ENCODE measurements at regions of chr7 and their contacts with region 1.

Region 1: GRCh38 chr7:992709-993607 is 10.0 kb downstream of the CYP2W1 start:
- DNase-seq: peak; percentile 85 to 97
- H3K4me3 ChIP-seq: no peak overlapping the region
- H3K27ac ChIP-seq: no peak overlapping the region
- H3K4me1 ChIP-seq: no peaks in the 10 kb centered on the region
- H3K27me3 ChIP-seq: no peaks in the 10 kb centered on the region
- CTCF ChIP-seq: peak; percentile 99

Region 2: GRCh38 chr7:913736-914516 is 79.0 kb before region 1 on chr7:
- CTCF ChIA-PET with region 1: no interaction called
- POLR2A ChIA-PET with region 1: no interaction called
- intact Hi-C with region 1: loop called (anchors 1 kb)
- DNase-seq: peak; percentile 65 to 98
- H3K4me3 ChIP-seq: no peak overlapping the region
- H3K27ac ChIP-seq: no peak overlapping the region
- H3K4me1 ChIP-seq: peaks cover 12% of the 10 kb centered on the region
- H3K27me3 ChIP-seq: no peaks in the 10 kb centered on the region
- CTCF ChIP-seq: no peak; the same call in 1 of the 2 replicates

Region 3: DNA sequence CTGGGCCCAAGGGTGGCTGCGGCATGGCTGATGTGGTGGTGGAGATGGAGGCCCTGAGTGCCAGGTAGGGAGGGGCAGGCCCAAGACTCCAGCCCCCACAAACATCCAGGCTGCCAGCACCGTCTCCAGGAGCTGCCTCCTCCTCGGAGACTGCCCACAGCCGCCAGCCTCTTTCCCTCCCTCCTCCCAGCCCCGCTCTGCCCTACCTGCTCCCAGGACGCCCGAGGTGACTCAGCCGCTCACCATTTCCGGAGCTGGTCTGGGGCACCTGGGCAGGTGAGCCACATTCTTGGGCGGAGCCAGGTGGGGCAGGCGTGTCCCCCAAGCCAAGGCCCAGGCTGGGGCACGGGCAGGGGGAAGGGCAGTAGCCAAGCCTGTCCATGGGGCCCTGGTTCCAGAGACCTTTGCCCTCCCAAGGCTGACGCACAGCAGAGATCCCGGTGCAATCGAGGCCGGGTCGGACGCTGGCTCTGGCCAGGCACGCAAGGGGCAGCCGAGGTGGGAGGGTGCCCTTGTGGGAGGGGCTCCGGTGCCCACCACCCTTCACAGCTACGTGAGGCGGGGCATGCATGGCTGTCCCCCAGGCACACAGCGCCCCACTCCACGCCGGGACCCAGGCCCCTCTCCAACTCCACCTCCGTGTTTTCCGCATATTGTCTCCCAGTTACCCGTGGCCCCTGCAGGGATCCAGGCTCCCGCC is 47.3 kb before region 1 on chr7:
- CTCF ChIA-PET with region 1: no interaction called
- POLR2A ChIA-PET with region 1: no interaction called
- intact Hi-C with region 1: loop called (anchors 1 kb)
- DNase-seq: peak; percentile 99 to 100
- H3K4me3 ChIP-seq: peak overlapping the region; percentile 48; the same call in 1 of the 2 replicates
- H3K27ac ChIP-seq: peak overlapping the region; percentile 94
- H3K4me1 ChIP-seq: peaks cover 61% of the 10 kb centered on the region
- H3K27me3 ChIP-seq: no peaks in the 10 kb centered on the region
- CTCF ChIP-seq: no peak

Region 4: GRCh38 chr7:1065263-1066260 is 72.6 kb after region 1 on chr7:
- CTCF ChIA-PET with region 1: interaction called, 25 read pairs
- POLR2A ChIA-PET with region 1: interaction called, 4 read pairs
- intact Hi-C with region 1: loop called (anchors 1 kb)
- DNase-seq: peak in 1 of 2 experiments; percentile 82
- H3K4me3 ChIP-seq: no peak overlapping the region
- H3K27ac ChIP-seq: no peak overlapping the region
- H3K4me1 ChIP-seq: no peaks in the 10 kb centered on the region
- H3K27me3 ChIP-seq: no peaks in the 10 kb centered on the region
- CTCF ChIP-seq: peak; percentile 80

Region 5: DNA sequence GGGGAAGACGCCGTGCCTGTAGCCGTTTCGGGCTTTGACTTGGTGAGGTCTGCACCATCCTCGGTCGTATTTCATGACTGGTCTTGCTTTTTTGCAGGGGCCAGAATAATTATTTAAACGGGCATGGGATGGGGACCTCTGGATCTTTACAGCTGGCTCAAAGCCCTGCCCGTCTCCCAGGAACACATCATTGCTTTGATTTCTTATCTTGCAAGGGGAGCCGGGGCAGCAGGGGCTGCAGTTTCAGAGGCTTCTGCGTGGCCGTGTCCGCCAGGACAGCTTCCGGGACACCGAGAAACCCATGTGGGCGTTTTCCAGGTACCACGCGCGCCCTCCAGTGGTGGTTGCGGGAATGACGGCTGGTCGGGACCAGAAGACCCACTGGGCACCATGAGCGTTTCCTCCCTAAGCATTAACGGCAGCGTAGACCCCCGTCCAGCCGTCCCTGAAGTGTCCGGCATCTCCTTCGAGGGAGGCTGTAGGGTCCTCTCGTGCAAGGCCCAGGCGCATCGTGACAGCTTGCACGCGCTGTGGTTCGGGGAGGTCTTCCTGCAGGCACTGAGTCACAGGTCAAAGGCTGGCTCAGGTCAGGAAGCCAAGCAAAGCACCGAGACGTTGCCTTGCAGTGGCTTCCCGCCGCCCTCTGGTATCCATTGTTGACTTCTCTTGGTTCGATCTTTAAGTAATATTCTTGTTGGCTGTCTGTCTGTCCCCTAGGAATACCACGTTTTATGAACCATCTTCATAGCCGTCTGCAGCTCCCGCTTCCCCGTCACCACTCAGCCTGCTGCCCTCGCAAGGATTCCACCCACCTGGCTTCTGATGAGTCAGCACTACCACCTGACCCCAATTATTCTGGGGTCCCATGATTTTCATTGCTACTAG is 183.3 kb after region 1 on chr7:
- CTCF ChIA-PET with region 1: interaction called, 17 read pairs
- POLR2A ChIA-PET with region 1: no interaction called
- intact Hi-C with region 1: loop called (anchors 1 kb)
- DNase-seq: peak; percentile 71 to 94
- H3K4me3 ChIP-seq: peak overlapping the region; percentile 41; the same call in 1 of the 2 replicates
- H3K27ac ChIP-seq: no peak overlapping the region
- H3K4me1 ChIP-seq: peaks cover 11% of the 10 kb centered on the region
- H3K27me3 ChIP-seq: 0 out of 2 replicates have a peak, but pooled peaks cover 10% of the 10 kb centered on the region
- CTCF ChIP-seq: peak; percentile 99

Region 6: DNA sequence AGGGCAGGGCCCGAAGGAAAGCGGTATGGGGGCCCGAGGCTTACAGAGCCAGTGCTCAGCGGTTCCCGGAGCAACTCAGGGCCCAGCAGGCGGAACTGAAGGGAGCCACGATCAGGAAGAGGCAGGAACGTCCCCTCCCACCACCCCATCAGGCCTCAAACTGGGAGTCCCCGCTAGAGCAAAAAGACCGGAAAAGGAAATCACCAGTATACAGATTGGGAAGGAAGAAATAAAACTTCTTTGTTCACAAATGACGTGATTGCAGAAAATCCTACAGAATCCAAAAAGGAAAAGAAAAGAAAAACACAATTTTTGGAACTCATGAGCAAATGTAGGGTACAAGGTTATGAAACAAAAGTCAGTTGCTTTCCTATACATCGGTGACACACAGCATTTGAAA is 188.7 kb after region 1 on chr7:
- CTCF ChIA-PET with region 1: interaction called, 17 read pairs
- POLR2A ChIA-PET with region 1: no interaction called
- intact Hi-C with region 1: loop called (anchors 1 kb)
- DNase-seq: no peak
- H3K4me3 ChIP-seq: no peak overlapping the region
- H3K27ac ChIP-seq: no peak overlapping the region
- H3K4me1 ChIP-seq: peaks cover 2% of the 10 kb centered on the region; the same call in 1 of the 2 replicates
- H3K27me3 ChIP-seq: peaks cover 54% of the 10 kb centered on the region
- CTCF ChIP-seq: no peak

Region 7: DNA sequence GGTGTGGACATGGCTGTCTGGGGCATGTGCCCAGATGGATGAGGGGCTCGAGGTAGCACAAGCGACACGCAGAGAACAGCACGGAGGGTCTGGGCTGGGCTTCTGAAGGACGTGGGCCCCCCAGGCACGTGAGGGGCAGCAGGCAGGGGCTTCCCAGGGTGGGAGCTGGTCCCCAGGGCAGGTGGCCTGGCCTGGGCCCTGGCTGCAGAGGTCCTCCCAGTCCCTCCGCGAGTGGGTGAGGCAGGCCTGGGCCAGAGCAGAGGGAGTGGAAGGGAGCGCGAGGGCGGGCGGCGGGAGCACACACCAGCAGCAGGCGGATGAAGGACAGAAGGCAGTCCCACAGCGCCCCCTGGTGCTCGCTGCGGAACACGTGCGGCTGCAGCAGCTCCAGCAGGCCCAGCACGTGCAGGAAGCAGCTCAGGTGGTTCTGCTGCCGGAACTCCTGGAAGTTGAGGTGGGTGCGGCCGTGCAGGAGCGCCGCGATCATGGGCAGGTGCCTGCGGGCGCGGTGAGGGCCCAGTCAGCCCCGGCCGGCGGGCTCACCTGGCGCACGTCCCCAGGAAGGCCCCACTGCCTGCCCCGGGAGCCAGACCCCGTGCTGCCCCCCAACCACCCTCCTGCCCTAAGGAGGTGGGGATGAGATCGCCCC is 481.0 kb after region 1 on chr7:
- CTCF ChIA-PET with region 1: no interaction called
- POLR2A ChIA-PET with region 1: no interaction called
- intact Hi-C with region 1: loop called (anchors 1 kb)
- DNase-seq: peak; percentile 73 to 95
- H3K4me3 ChIP-seq: no peak overlapping the region
- H3K27ac ChIP-seq: no peak overlapping the region
- H3K4me1 ChIP-seq: no peaks in the 10 kb centered on the region
- H3K27me3 ChIP-seq: no peaks in the 10 kb centered on the region
- CTCF ChIP-seq: peak; percentile 95

Measured in PC-9 (cell line).